ENCODE measurements at regions of chr2 and their contacts with region 1.

Region 1: DNA sequence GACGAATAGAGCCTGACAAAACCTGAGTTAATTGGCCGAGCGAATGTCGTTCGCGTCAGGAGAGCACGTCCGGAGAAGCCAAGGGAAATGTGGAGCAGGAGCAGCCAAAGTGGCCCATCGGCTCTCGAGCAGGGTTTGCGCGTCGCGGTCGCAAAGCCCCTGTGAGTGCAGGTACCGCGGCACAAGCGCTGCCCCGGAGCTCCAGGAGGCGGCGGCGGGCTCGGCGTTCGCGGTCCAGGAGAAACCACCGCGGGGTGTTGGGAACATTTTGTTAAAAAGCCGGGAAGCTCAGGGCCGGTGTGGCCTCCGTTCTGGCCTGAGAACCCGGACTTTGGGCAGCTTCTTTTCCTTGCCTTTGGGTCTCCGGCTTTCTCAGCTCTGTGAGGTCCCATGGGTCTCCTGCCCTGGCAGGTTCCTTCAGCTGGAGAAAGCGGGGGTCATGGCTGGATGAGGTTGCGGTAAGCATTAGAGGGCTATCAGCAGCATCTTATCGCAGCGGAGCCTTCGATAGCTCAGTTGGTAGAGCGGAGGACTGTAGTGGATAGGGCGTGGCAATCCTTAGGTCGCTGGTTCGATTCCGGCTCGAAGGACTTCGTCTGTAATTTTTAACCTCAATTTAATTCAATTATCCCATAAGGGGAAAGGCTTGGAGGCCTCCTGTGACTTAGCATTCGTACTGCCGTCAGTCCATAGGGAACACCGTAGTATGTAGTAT is 1.0 kb upstream of the AGBL5 start:
- DNase-seq: peak; percentile 95
- ATAC-seq: peak; percentile 73
- H3K4me3 Mint-ChIP-seq: peak overlapping the region; percentile 90
- H3K27ac Mint-ChIP-seq: peak overlapping the region; percentile 98
- H3K4me1 Mint-ChIP-seq: peaks cover 18% of the 10 kb centered on the region
- H3K27me3 Mint-ChIP-seq: peaks cover 4% of the 10 kb centered on the region

Region 2: GRCh38 chr2:26345545-26346453 is 704.6 kb before region 1 on chr2 and contains the start of gene SELENOI:
- CTCF ChIA-PET with region 1: no interaction called
- POLR2A ChIA-PET with region 1: no interaction called
- intact Hi-C with region 1: loop called in 1 of 2 experiments (anchors 5 kb)
- DNase-seq: peak; percentile 100
- ATAC-seq: peak; percentile 94
- H3K4me3 Mint-ChIP-seq: peak within 1 kb of the TSS; percentile 91
- H3K27ac Mint-ChIP-seq: peak within 1 kb of the TSS; percentile 98
- H3K4me1 Mint-ChIP-seq: peaks cover 36% of the 10 kb centered on the region
- H3K27me3 Mint-ChIP-seq: no peaks in the 10 kb centered on the region
- total RNA-seq, gene SELENOI: 26.5 to 42.3 TPM

Region 3: GRCh38 chr2:27032495-27033252 is 17.8 kb before region 1 on chr2 and contains the start of gene TMEM214:
- CTCF ChIA-PET with region 1: interaction called, 17 read pairs
- POLR2A ChIA-PET with region 1: interaction called, 15 read pairs
- intact Hi-C with region 1: loop called (anchors 1 kb)
- DNase-seq: peak; percentile 89
- ATAC-seq: peak; percentile 96
- H3K4me3 Mint-ChIP-seq: peak within 1 kb of the TSS; percentile 89
- H3K27ac Mint-ChIP-seq: peak within 1 kb of the TSS; percentile 80
- H3K4me1 Mint-ChIP-seq: peaks cover 39% of the 10 kb centered on the region
- H3K27me3 Mint-ChIP-seq: no peaks in the 10 kb centered on the region
- total RNA-seq, gene TMEM214: 54.1 to 69.1 TPM

Region 4: GRCh38 chr2:27123302-27124231 is 73.1 kb after region 1 on chr2 and contains the start of gene ABHD1:
- CTCF ChIA-PET with region 1: no interaction called
- POLR2A ChIA-PET with region 1: no interaction called
- intact Hi-C with region 1: loop called in 1 of 2 experiments (anchors 1 kb)
- DNase-seq: peak; percentile 72
- ATAC-seq: peak; percentile 79
- H3K4me3 Mint-ChIP-seq: peak within 1 kb of the TSS; percentile 73
- H3K27ac Mint-ChIP-seq: peak within 1 kb of the TSS; percentile 74
- H3K4me1 Mint-ChIP-seq: peaks cover 16% of the 10 kb centered on the region
- H3K27me3 Mint-ChIP-seq: peaks cover 15% of the 10 kb centered on the region
- total RNA-seq, gene ABHD1: 0.39 to 0.65 TPM

Region 5: DNA sequence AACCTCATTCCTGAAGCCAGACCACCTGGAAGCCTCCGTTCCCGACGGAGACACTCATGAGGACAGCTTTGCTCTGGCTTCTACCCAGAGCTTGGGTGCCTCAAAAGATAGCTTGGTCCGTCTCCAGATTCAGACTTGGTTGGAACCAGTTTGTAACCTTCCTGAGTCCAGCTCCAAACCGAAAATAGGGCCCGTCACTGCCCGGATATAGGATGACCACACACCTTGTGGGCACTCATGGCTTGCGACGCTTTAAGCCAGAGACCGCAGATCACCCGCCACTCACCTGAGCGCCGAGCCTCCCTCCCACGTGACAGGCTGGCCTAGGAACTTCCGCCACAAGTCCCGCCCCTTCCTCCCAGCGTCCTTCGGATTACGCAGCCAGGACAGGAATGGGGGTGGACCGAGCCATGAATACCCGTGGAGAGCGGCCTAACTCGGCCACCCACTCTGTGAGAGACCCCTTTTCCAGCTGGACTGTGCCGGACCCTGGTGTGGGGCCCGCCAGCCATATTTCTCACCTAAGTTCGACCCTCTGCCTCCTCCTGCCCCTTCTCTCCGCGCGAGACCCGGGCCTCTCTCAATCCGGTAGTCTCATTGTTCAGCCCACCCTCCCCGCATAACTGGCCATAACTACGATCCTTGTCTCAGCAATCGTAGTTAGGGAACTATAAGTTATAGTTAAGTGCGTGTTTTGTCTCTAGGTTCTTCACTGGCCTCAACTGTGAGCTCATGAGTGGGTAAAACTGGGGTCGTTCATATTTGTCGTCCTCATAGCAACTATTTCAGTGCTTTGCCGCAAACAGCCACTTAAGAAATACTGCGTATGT is 272.5 kb after region 1 on chr2 and contains the start of gene MPV17:
- CTCF ChIA-PET with region 1: interaction called, 3 read pairs
- POLR2A ChIA-PET with region 1: no interaction called
- intact Hi-C with region 1: loop called in 1 of 2 experiments (anchors 2 kb)
- DNase-seq: peak; percentile 94
- ATAC-seq: peak; percentile 99
- H3K4me3 Mint-ChIP-seq: peak within 1 kb of the TSS; percentile 98
- H3K27ac Mint-ChIP-seq: peak within 1 kb of the TSS; percentile 98
- H3K4me1 Mint-ChIP-seq: peaks cover 17% of the 10 kb centered on the region
- H3K27me3 Mint-ChIP-seq: no peaks in the 10 kb centered on the region
- total RNA-seq, gene MPV17: 93.4 to 103 TPM

Region 6: GRCh38 chr2:27489498-27490397 is 439.3 kb after region 1 on chr2 and contains the start of gene IFT172:
- CTCF ChIA-PET with region 1: no interaction called
- POLR2A ChIA-PET with region 1: interaction called, 3 read pairs
- intact Hi-C with region 1: loop called in 1 of 2 experiments (anchors 2 kb)
- DNase-seq: peak; percentile 100
- ATAC-seq: peak; percentile 97
- H3K4me3 Mint-ChIP-seq: peak within 1 kb of the TSS; percentile 75
- H3K27ac Mint-ChIP-seq: peak within 1 kb of the TSS; percentile 63
- H3K4me1 Mint-ChIP-seq: peaks cover 23% of the 10 kb centered on the region
- H3K27me3 Mint-ChIP-seq: peaks cover 11% of the 10 kb centered on the region
- total RNA-seq, gene IFT172: 8.7 TPM

Measured in activated CD4-positive, alpha-beta T cell treated with anti-CD3 and anti-CD28 coated beads for 36 hours (primary cell).